Left cardiac atrium (tissue), 4 donors: ENCODE measurements at regions of chr3 and their contacts with region 1.

Region 1: DNA sequence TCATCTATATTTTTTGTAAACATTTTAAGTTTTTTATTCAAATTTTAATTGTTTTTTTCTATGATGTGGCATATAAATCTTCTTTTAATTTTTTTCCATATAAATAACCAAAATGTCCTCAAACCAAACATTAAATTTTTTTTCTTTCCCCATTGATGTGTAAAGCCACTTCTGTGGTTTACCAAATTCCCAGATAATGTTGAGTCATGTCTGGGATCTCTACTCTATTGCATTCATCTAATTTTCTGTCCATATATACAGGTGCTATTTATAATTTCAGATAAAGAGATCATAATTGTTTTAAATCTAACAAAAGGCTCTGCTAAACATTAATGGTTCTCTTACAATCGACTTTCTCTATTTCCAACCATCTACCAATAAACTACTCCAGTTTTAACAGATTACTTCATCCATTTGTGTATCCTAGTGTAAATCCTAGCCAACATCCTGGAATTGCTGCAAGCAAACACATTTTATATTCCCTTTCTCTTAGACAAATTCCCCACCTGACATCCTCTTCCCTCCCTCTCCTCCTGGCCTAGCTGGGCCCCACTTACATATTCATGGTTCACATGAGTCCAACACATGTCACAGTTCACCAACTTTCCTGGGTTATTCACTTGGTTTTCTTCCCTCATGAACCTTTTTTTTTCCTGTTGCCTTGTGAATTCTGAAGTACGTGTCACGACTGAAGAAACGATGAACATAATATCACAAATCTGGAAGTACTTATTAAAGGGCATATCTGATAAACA is 368.0 kb upstream of the AGTR1 start:
- DNase-seq: no peak
- ATAC-seq: no peak

Region 2: GRCh38 chr3:148255981-148256969 is 73.4 kb before region 1 on chr3:
- intact Hi-C with region 1: no loop called
- DNase-seq: no peak
- ATAC-seq: no peak

Region 3: DNA sequence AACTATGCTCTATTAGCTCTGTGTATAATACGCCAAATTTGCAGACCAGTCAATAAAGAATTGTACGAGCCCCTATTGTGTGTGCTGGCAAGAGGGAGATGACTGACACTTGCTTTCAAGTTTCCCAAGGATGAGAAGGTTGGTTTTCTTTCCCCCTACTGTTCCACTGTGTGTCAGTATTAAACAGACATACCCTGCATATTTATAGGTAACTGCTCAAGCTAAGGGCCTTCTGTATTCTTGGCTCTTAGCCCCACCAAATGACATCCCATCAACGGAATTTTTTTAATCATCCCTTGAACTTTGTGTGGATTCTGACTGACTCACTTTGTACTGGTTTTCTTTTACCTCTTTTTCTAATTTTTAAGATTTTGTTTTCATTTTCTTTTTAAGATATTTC is 601.1 kb after region 1 on chr3:
- intact Hi-C with region 1: loop called in 1 of 2 experiments (anchors 5 kb)
- DNase-seq: no peak
- ATAC-seq: no peak